ENCODE measurements at regions of chr16 and their contacts with region 1.

Region 1: GRCh38 chr16:58661199-58661830 is 23.3 kb downstream of the SLC38A7 start:
- DNase-seq: no peak
- ATAC-seq: peak; percentile 88
- H3K4me3 Mint-ChIP-seq: no peak overlapping the region
- H3K27ac Mint-ChIP-seq: no peak overlapping the region
- H3K4me1 Mint-ChIP-seq: no peaks in the 10 kb centered on the region
- H3K27me3 Mint-ChIP-seq: no peaks in the 10 kb centered on the region
- CTCF ChIP-seq: no peak

Region 2: GRCh38 chr16:58336332-58337089 is 324.8 kb before region 1 on chr16:
- CTCF ChIA-PET with region 1: interaction called, 5 read pairs
- POLR2A ChIA-PET with region 1: no interaction called
- intact Hi-C with region 1: loop called (anchors 1 kb)
- DNase-seq: peak; percentile 77
- ATAC-seq: peak; percentile 93
- H3K4me3 Mint-ChIP-seq: peak overlapping the region; percentile 60
- H3K27ac Mint-ChIP-seq: no peak overlapping the region
- H3K4me1 Mint-ChIP-seq: peaks cover 6% of the 10 kb centered on the region
- H3K27me3 Mint-ChIP-seq: no peaks in the 10 kb centered on the region
- CTCF ChIP-seq: peak; percentile 96

Region 3: GRCh38 chr16:58515125-58515870 is 146.0 kb before region 1 on chr16 and contains the start of gene SETD6:
- CTCF ChIA-PET with region 1: interaction called, 11 read pairs
- POLR2A ChIA-PET with region 1: interaction called, 3 read pairs
- intact Hi-C with region 1: loop called (anchors 1 kb)
- DNase-seq: peak; percentile 81
- ATAC-seq: peak; percentile 77
- H3K4me3 Mint-ChIP-seq: peak within 1 kb of the TSS; percentile 91
- H3K27ac Mint-ChIP-seq: peak within 1 kb of the TSS; percentile 84
- H3K4me1 Mint-ChIP-seq: peaks cover 24% of the 10 kb centered on the region
- H3K27me3 Mint-ChIP-seq: no peaks in the 10 kb centered on the region
- CTCF ChIP-seq: no peak
- total RNA-seq, gene SETD6: 25.6 and 31.1 TPM in 2 replicates

Region 4: GRCh38 chr16:58582971-58583765 is 78.1 kb before region 1 on chr16:
- CTCF ChIA-PET with region 1: no interaction called
- POLR2A ChIA-PET with region 1: no interaction called
- intact Hi-C with region 1: loop called (anchors 10 kb)
- DNase-seq: no peak
- ATAC-seq: no peak
- H3K4me3 Mint-ChIP-seq: no peak overlapping the region
- H3K27ac Mint-ChIP-seq: no peak overlapping the region
- H3K4me1 Mint-ChIP-seq: no peaks in the 10 kb centered on the region
- H3K27me3 Mint-ChIP-seq: no peaks in the 10 kb centered on the region
- CTCF ChIP-seq: no peak

Region 5: DNA sequence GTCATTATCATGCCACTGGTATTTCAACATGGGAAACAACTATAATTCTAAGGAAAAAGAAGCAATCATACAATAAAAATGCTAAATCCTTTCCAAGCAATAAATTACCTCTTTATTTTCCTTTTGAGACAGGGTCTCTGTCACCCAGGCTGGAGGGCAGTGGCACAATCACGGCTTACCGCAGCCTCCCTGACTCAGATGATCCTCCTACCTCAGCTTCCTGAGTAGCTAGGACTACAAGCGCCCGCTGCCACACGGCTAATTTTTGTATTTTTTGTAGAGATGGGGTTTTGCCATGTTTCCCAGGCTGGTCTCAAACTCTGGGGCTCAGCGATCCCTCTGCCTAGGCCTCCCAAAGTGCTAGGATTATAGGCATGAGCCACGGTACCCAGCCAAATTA is 55.8 kb before region 1 on chr16:
- CTCF ChIA-PET with region 1: no interaction called
- POLR2A ChIA-PET with region 1: no interaction called
- intact Hi-C with region 1: no loop called
- DNase-seq: no peak
- ATAC-seq: no peak
- H3K4me3 Mint-ChIP-seq: no peak overlapping the region
- H3K27ac Mint-ChIP-seq: no peak overlapping the region
- H3K4me1 Mint-ChIP-seq: peaks cover 19% of the 10 kb centered on the region
- H3K27me3 Mint-ChIP-seq: no peaks in the 10 kb centered on the region
- CTCF ChIP-seq: no peak